Gastrocnemius medialis (tissue), 4 donors: ENCODE measurements at regions of chrX and their contacts with region 1.

Region 1: DNA sequence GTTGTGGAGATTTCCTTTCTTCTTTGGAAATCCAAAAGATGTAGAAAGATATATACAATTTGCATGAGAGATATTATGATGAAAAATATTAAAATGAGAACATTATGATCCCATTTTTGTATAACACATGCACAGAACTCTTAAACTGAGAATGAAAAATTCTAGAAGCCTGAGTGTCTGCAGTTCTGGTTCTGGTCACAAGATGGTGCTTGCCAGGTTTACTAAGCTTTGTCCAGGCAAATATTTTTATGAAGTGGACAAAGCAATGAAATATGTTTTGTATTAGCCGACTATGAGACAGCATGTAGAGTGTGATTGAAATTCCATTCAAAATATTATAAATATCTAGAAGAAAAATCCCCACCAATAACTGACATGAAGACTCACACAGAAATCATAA is 2.2 kb downstream of the PWWP3B start:
- DNase-seq: no peak
- ATAC-seq: peak in 1 of 2 donors; percentile 65
- H3K4me3 ChIP-seq: no peak overlapping the region
- H3K27ac ChIP-seq: no peak overlapping the region
- H3K4me1 ChIP-seq: no peaks in the 10 kb centered on the region
- H3K27me3 ChIP-seq: peaks cover 0 to 4% (median 3%) of the 10 kb centered on the region in 3 donors
- CTCF ChIP-seq: peak in 3 of 5 experiments; percentile 48 to 50 (median 50)
- POLR2A ChIP-seq: no peak

Region 2: GRCh38 chrX:106013783-106014775 is 156.2 kb before region 1 on chrX:
- in situ Hi-C with region 1: no loop called
- intact Hi-C with region 1: no loop called
- DNase-seq: no peak
- ATAC-seq: no peak
- H3K4me3 ChIP-seq: no peak overlapping the region
- H3K27ac ChIP-seq: no peak overlapping the region
- H3K4me1 ChIP-seq: no peaks in the 10 kb centered on the region
- H3K27me3 ChIP-seq: no peaks in the 10 kb centered on the region
- CTCF ChIP-seq: no peak
- POLR2A ChIP-seq: no peak

Region 3: DNA sequence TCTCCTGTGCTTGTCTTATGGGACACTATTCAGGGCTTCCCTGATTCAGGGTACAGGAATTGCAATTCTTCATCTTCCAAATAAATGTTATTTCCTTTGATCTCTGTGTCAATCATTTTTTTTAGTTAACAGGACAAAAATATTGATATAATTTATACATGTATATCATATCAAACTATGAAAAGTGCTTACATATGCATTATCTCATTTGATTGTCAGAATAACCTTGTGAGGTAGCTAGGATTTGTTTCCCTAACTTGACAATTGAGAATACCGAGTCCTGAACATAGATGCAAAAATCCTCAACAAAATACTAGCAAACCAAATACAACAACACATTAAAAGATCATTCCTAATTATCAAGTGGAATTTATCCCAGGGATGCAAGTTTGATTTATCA is 120.3 kb before region 1 on chrX:
- in situ Hi-C with region 1: no loop called
- intact Hi-C with region 1: no loop called
- DNase-seq: no peak
- ATAC-seq: no peak
- H3K4me3 ChIP-seq: no peak overlapping the region
- H3K27ac ChIP-seq: no peak overlapping the region
- H3K4me1 ChIP-seq: no peaks in the 10 kb centered on the region
- H3K27me3 ChIP-seq: peaks cover 0 to 3% (median 0%) of the 10 kb centered on the region in 3 donors
- CTCF ChIP-seq: no peak
- POLR2A ChIP-seq: no peak

Region 4: GRCh38 chrX:106220177-106220576 is 49.9 kb after region 1 on chrX:
- in situ Hi-C with region 1: no loop called
- intact Hi-C with region 1: loop called (anchors 1 kb)
- DNase-seq: no peak
- ATAC-seq: no peak
- H3K4me3 ChIP-seq: no peak overlapping the region
- H3K27ac ChIP-seq: no peak overlapping the region
- H3K4me1 ChIP-seq: no peaks in the 10 kb centered on the region
- H3K27me3 ChIP-seq: no peaks in the 10 kb centered on the region
- CTCF ChIP-seq: peak in 2 of 5 experiments; percentile 18 to 39
- POLR2A ChIP-seq: no peak

Region 5: GRCh38 chrX:106397801-106398538 is 227.7 kb after region 1 on chrX:
- in situ Hi-C with region 1: no loop called
- intact Hi-C with region 1: loop called (anchors 2 kb)
- DNase-seq: no peak
- ATAC-seq: no peak
- H3K4me3 ChIP-seq: no peak overlapping the region
- H3K27ac ChIP-seq: no peak overlapping the region
- H3K4me1 ChIP-seq: no peaks in the 10 kb centered on the region
- H3K27me3 ChIP-seq: no peaks in the 10 kb centered on the region
- CTCF ChIP-seq: peak in 2 of 5 experiments; percentile 8 to 24
- POLR2A ChIP-seq: no peak